ENCODE measurements at regions of chr12 and their contacts with region 1.

Region 1: DNA sequence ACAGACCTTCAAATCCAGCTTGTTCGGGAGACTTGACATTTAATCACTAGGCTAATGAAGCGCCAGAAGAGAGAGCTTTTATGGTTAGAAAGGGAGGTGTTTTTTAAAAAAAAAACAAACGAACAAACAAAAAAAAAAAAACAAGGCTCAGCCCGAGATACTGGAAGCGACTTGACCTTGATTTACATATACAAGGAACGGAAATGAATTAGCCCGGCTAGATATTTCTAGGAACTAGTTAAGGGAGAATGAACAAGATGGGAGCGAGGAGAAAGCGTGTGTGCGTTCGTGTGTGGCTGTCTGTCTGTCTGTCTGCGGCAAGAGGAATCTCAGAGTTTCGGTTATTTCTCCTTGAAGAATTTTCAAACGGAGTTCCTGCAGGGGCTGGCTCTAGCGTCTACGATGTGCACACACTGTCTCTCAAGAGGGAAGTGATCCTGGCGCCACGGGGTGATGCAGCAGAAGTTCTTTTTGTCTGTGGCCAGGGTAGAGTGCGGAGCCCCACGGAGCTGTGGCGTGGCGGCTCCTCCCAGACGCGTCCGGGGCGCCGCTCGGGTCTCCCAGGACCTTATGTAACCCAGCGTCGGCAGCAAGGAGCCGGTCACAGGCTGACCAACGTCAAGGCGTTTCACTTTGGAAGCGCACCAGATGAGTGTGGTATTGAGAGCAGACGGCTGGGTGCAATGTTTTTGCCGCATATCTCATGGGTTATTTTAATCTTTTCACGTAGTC is 18.8 kb downstream of the SOCS2 start:
- DNase-seq: peak; percentile 73
- H3K4me3 ChIP-seq: peak overlapping the region; percentile 54
- H3K27ac ChIP-seq: peak overlapping the region; percentile 47
- H3K4me1 ChIP-seq: peaks cover 21% of the 10 kb centered on the region
- H3K27me3 ChIP-seq: no peaks in the 10 kb centered on the region
- CTCF ChIP-seq: no peak

Region 2: DNA sequence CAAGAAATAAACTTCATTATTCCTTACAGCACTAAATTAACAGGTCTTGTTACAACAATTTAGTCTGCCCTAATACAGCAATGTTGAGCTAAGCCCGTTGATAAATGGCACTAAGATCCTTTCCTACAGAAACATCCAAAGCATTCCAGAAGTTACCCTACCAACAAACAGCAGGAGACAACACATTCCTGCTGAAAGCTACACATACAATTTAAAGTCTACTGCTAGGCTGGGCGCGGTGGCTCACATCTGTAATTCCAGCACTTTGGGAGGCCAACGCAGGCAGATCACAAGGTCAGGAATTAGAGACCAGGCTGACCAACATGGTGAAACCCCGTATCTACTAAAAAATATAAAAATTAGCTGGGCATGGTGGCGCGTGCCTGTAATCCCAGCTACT is 1343.3 kb after region 1 on chr12:
- CTCF ChIA-PET with region 1: interaction called, 12 read pairs
- POLR2A ChIA-PET with region 1: no interaction called
- intact Hi-C with region 1: no loop called
- DNase-seq: no peak
- H3K4me3 ChIP-seq: no peak overlapping the region
- H3K27ac ChIP-seq: no peak overlapping the region
- H3K4me1 ChIP-seq: no peaks in the 10 kb centered on the region
- H3K27me3 ChIP-seq: no peaks in the 10 kb centered on the region
- CTCF ChIP-seq: no peak